Activated B cell treated with CpG ODN at 0.5 μM for 24 hours (primary cell): ENCODE measurements at regions of chr7 and their contacts with region 1.

Region 1: DNA sequence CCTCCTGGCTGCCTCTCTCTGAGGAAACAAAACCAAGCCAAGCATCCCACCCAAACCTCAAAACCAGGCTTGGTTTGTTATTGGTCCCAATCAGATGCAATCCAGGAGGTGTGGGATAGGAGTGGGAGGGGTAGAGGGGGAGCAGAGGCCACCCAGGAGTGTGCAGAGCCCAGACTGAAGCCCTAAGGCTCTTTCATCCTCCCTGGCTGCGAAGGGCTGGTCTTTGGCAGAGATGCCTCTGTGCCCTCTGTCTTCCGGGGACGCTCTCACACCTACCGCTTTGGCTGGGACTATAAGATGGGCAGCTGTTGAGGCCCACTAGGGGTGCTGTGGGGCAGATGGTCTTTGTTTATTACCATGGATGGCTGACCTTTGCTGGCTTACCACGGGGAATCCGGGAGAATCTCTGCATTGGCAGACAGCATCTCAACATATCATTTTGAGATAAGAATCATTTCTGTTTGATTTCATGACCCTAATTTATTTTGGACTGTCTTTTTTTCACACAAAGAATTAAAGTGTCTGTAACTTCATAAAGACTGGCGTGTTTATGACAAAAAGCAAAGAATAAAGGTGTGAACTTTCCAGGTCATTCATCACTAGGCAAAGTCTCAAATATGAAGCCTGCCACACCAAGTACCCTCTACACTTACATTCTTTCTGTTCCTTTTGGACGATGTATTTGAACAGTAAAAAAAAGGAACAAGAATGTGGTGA is 6.5 kb upstream of the DENND2A start:
- DNase-seq: peak; percentile 27
- ATAC-seq: peak; percentile 97
- H3K4me3 Mint-ChIP-seq: no peak overlapping the region
- H3K27ac Mint-ChIP-seq: peak overlapping the region; percentile 1
- H3K4me1 Mint-ChIP-seq: peaks cover 12% of the 10 kb centered on the region
- H3K27me3 Mint-ChIP-seq: peaks cover 9% of the 10 kb centered on the region
- CTCF ChIP-seq: no peak

Region 2: GRCh38 chr7:140625908-140626868 is 20.9 kb before region 1 on chr7:
- CTCF ChIA-PET with region 1: no interaction called
- POLR2A ChIA-PET with region 1: no interaction called
- intact Hi-C with region 1: no loop called
- DNase-seq: no peak
- ATAC-seq: no peak
- H3K4me3 Mint-ChIP-seq: no peak overlapping the region
- H3K27ac Mint-ChIP-seq: no peak overlapping the region
- H3K4me1 Mint-ChIP-seq: peaks cover 6% of the 10 kb centered on the region
- H3K27me3 Mint-ChIP-seq: peaks cover 7% of the 10 kb centered on the region
- CTCF ChIP-seq: no peak

Region 3: DNA sequence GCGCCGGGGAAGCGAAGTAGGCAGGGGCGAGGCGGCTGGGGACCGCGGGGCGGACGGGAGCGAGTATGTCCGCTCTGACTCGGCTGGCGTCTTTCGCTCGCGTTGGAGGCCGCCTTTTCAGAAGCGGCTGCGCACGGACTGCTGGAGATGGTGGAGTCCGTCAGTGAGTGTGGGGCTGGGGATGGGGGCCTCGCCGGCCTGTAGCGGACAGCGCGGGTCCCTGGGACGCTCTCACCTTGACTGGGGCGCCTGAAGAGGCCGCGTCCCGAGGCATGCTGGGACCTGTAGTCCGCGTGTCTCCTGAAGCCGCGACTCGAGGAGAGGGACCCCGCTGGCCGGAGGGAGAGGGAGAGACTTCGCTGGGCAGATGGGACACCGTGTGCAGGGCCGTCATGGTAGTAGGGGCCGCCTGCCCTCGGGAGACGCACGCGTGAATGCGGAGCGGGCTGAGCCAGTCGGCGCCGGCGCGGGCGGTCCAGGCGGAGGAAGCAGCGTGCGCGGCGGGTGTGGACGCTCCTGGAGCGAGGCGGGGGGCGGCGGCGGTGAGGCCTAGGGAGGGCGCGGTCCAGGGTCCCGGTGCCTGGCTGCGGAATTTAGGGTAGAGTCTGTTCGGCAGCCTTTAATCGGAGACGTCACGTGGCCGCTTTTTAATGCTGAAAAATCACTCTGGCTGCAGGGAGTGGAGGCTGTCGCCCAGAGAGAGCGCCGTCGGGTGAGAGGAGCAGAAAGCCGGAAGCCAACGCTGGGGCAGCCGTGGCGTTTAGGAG is 49.8 kb after region 1 on chr7 and contains the start of gene NDUFB2:
- CTCF ChIA-PET with region 1: no interaction called
- POLR2A ChIA-PET with region 1: no interaction called
- intact Hi-C with region 1: loop called (anchors 2 kb)
- DNase-seq: peak; percentile 90
- ATAC-seq: peak; percentile 86
- H3K4me3 Mint-ChIP-seq: peak within 1 kb of the TSS; percentile 94
- H3K27ac Mint-ChIP-seq: peak within 1 kb of the TSS; percentile 98
- H3K4me1 Mint-ChIP-seq: peaks cover 34% of the 10 kb centered on the region
- H3K27me3 Mint-ChIP-seq: no peaks in the 10 kb centered on the region
- CTCF ChIP-seq: no peak
- total RNA-seq, gene NDUFB2: 140 and 168 TPM in 2 replicates

Region 4: GRCh38 chr7:141533149-141533949 is 886.3 kb after region 1 on chr7:
- CTCF ChIA-PET with region 1: no interaction called
- POLR2A ChIA-PET with region 1: no interaction called
- intact Hi-C with region 1: no loop called
- DNase-seq: peak; percentile 29
- ATAC-seq: peak; percentile 45
- H3K4me3 Mint-ChIP-seq: no peak overlapping the region
- H3K27ac Mint-ChIP-seq: no peak overlapping the region
- H3K4me1 Mint-ChIP-seq: no peaks in the 10 kb centered on the region
- H3K27me3 Mint-ChIP-seq: peaks cover 23% of the 10 kb centered on the region
- CTCF ChIP-seq: peak; percentile 54